ENCODE measurements at regions of chr1 and their contacts with region 1.

Region 1: GRCh38 chr1:150281837-150282653 is at the start of gene CIART:
- DNase-seq: peak; percentile 72
- H3K4me3 Mint-ChIP-seq: peak within 1 kb of the TSS; percentile 90
- H3K27ac Mint-ChIP-seq: peak within 1 kb of the TSS; percentile 86
- H3K4me1 Mint-ChIP-seq: peaks cover 24% of the 10 kb centered on the region
- H3K27me3 Mint-ChIP-seq: peaks cover 17% of the 10 kb centered on the region
- total RNA-seq, gene CIART: 4.2 TPM in 2 replicates

Region 2: DNA sequence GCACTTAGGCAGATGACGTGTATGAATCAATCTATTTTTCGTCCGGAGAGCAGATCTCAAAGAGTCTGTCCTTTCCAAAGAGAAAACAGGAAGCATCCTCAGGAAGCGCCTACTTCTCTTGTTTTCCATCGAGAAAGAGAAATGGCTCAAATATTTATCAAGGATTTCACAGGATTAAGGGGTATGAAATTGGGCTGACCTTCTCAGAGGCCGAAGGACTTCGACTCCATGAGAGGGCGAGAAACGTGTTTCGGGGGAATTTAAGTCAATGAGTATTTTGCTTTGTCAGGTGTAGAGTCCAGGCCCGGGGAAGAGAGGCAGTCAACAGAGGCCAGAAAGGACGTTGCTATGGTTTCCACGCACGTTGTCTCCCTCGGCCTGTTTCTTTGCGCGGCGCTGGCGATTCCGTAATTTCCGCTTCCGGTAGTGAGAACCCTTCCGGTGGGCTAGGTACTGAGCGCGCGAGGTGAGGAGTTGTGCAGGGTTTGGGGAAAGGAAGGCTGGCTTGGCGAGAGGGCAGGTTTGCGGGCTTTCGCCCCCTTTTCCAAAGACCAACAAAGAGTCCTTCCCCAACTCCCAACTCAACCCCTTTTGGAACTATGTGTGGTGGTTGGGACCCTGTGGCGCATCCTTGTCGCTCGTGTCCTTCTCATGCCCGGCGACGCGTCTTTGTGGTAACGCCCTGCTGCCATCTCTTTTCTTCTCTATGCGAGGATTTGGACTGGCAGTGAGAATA is 11.6 kb after region 1 on chr1 and contains the start of gene MRPS21:
- intact Hi-C with region 1: loop called (anchors 1 kb)
- DNase-seq: peak; percentile 86
- H3K4me3 Mint-ChIP-seq: peak within 1 kb of the TSS; percentile 92
- H3K27ac Mint-ChIP-seq: peak within 1 kb of the TSS; percentile 98
- H3K4me1 Mint-ChIP-seq: peaks cover 21% of the 10 kb centered on the region
- H3K27me3 Mint-ChIP-seq: no peaks in the 10 kb centered on the region
- total RNA-seq, gene MRPS21: 80.7 and 83.4 TPM in 2 replicates